GM10248 (cell line): ENCODE measurements at regions of chr12 and their contacts with region 1.

Region 1: DNA sequence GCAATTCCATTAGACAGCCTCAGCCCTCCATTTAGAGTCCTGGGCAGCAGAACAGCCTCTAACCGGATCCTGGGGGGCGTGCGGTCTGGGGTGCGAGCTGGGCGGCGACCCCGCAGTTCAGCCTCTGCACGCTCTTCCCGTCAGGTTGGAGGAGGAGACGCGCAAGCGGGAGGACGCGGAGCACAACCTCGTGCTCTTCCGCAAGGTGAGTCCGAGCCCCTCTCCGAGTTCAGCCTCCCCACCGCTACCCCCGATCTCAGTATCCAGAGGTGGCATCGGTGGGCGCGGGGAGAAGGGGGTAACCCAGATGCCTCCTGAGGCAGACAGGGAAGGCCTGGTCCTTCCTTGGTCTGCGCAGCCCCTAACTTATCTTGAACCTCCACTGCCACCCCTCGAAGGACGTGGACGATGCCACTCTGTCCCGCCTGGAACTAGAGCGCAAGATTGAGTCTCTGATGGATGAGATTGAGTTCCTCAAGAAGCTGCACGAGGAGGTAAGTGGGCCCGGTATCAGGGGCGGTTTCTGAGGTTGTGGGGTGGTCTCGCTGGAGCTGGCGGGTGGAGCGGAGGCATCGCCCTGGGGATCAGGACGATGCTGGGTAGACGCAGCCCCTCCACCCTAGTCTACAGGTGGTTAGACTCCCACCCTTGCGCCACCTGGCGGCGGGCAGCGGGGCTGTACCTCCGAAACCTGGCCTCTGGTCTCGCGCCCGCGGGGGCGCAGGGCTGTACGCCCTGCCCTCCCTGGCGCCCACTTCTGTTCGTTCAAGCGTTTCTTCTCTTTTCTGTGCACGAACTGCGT is 1.3 kb downstream of the PRPH start:
- DNase-seq: peak; percentile 87
- CTCF ChIP-seq: peak; percentile 80

Region 2: GRCh38 chr12:49161092-49161795 is 135.0 kb before region 1 on chr12:
- CTCF ChIA-PET with region 1: no interaction called
- POLR2A ChIA-PET with region 1: no interaction called
- DNase-seq: no peak
- CTCF ChIP-seq: no peak

Region 3: DNA sequence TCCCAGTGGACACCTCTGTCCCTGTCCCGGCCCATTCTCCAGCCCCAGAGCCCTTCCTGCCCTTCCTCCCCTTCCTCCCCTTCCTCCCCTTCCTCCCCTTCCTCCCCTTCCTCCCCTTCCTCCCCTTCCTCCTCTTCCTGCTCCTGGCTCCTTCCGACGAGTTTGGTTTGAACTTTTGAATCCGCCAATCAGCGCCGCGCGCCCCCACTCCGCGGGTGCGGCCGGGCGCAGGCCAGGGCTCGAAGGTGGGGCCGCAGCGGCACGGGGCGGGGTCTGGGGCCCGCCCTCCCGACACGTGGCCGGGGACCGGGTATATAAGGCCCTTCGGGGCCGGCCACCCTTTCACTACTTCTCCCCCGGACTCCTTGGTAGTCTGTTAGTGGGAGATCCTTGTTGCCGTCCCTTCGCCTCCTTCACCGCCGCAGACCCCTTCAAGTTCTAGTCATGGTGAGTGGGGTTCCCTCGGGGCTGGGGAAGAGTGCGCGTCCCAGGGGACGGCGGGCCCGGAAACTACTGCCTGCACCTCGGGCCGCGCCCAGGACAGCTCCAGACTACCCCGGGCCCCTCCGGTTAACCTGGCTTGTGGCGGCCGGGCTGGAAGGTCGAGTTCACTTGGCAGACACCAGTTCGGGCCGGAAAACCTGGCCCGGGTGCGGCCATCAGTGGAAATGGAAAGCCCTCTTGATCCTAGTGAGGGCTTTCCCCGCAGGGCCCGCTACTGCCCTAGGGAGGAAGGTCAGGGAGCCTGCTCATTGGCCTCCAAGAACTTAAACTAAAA is 31.3 kb before region 1 on chr12 and contains the start of gene TUBA1C:
- CTCF ChIA-PET with region 1: interaction called, 4 read pairs
- POLR2A ChIA-PET with region 1: interaction called, 12 read pairs
- DNase-seq: peak; percentile 100
- CTCF ChIP-seq: no peak

Region 4: DNA sequence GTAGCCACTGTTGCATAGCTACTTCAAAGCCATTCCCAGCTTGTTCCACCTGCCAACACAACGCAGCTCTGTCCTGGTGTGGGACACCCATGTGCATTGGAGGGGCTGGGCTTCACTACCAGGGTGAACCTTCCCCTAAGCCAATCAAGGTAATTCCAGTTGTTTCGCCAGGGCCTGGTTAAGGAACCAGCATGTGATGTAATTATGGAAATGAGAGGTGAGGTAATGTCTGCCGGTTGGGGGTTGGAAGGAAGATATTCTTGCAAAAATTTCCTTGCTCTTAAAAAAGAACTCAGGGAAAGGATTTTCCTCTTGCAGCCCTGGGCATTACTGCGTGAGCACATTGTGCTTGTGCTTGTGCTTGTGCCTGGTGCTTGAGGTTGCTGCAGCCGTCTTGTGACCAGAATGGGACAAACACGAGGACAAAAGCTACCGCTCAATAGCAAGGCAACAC is 16.5 kb before region 1 on chr12:
- CTCF ChIA-PET with region 1: interaction called, 10 read pairs
- POLR2A ChIA-PET with region 1: no interaction called
- DNase-seq: no peak
- CTCF ChIP-seq: no peak

Region 5: DNA sequence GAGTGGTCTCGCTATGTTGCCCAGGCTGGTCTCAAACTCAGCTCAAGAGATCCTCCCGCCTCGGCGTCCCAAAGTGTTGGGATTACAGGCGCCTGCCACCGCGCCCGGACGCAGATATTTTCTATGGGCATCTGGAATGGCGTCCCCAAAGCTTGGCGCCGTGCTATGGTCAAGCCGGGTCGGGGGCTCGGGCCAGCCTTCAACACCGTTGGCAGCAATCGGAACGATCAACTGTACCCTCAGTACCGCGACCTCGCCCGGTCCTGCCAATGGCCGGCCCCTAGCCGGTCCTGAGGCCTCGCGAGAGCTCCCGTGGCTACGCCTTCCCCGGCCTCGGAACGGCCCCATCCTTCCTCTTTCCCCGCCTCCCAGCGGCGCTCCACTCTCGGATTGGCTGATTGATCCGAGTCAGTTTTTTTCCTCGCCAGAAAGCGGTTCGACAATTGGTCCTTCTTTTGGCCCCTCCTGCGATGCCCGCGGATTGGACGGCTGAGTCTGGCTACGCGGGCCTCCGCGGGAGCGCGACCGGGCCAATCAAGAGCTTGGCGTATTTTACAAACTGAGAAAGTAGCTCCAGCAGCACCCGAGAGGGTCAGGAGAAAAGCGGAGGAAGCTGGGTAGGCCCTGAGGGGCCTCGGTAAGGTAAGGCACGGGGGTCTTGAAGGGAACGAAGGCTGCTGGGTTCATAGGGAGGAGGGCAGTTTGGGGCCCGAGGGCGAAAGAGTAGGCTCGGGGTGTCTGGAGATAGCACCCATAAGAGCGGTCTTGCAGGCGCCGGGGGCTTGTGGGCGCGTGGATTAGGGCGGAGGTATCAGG is 26.7 kb after region 1 on chr12 and contains the start of gene TROAP:
- CTCF ChIA-PET with region 1: interaction called, 19 read pairs
- POLR2A ChIA-PET with region 1: no interaction called
- DNase-seq: peak; percentile 99
- CTCF ChIP-seq: no peak

Region 6: GRCh38 chr12:49331380-49332222 is 35.4 kb after region 1 on chr12:
- CTCF ChIA-PET with region 1: interaction called, 57 read pairs
- POLR2A ChIA-PET with region 1: no interaction called
- DNase-seq: peak; percentile 16
- CTCF ChIP-seq: peak; percentile 70

Region 7: DNA sequence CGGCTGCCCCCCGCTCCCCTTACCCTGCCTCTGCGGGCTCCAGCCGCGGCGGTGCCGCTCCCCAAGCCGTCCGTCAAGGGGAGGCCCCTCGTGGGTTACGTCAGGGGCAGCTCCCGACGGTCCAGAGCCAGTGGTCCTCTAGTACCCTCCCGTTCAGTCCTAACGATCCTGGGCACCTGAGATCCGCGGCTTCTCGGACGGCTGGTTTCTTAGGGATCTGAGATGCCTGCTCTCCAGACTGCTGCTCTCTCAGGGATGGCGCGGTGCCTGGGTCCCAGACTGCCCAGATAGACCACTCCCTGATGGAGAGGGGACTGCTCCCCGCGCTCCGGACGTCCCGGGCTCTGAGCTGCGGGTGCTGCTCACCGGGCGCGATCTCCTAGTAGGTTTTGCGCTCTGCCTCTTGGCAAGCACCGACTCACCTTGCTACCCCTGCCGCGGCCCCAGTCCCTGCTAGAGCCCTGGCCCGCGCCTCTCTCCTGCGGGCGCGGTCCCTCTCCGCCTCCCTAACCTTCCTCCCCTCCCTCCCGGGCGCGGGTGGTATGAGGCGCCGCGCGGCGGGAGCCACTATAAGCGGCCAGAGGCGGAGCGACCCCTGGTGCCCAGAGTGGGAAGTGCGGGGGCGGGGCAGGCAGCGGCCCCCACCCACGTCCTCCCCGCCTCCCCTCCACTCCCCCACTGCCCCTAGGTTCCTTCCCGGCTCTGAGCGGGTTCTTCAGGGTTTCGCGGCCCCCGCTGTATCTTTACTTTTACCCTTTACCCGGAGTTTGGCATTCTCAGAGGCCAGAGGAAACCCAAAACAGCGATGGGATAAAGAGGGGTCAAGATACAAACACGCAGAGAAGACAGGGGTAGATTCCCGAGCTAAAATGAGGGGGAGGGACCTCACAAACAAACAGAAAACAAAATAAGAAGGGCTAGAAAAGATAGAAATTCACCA is 40.7 kb after region 1 on chr12 and contains the start of gene C1QL4:
- CTCF ChIA-PET with region 1: interaction called, 174 read pairs
- POLR2A ChIA-PET with region 1: no interaction called
- DNase-seq: peak; percentile 89
- CTCF ChIP-seq: peak; percentile 88

Region 8: GRCh38 chr12:49388682-49389386 is 92.6 kb after region 1 on chr12:
- CTCF ChIA-PET with region 1: no interaction called
- POLR2A ChIA-PET with region 1: no interaction called
- DNase-seq: peak; percentile 45
- CTCF ChIP-seq: peak; percentile 27

Region 9: DNA sequence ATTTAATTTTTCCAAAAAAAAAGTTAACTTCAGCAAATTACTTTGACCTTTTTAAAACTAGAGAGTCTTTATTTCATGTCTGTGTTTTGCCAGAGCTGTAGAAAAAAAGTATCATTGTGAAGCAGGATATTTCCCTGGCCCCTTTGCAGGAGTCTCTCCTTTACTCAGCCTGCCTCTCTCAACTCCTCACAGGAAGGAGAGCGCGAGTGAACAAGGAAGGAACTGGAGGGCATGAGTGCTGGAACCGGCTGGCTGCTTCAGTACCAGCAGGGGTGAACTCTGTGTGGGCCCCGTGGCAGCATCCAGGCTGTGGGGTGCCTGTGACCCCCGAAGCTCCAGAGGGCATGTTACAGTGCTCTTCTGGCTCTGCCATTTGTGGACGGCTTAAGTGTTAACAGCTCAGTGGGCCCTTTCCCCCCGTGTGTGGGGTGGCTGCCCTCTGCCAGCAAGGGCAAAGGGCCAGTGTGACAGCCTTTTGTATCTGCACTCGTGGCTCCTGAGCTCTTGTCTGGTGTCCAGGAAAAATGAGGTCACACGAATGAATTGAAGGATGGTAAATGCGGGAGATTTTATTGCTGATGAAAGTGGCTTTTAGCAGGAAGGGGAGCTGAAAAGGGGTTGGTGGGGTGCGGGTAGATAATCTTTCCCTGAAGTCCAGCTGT is 166.0 kb after region 1 on chr12:
- CTCF ChIA-PET with region 1: no interaction called
- POLR2A ChIA-PET with region 1: no interaction called
- DNase-seq: no peak
- CTCF ChIP-seq: no peak